ENCODE measurements at regions of chr10 and their contacts with region 1.

Region 1: GRCh38 chr10:9188147-9188949 is 1133.9 kb downstream of the GATA3 start:
- DNase-seq: no peak
- H3K4me3 ChIP-seq: no peak overlapping the region
- H3K27ac ChIP-seq: no peak overlapping the region
- H3K4me1 ChIP-seq: no peaks in the 10 kb centered on the region
- H3K27me3 ChIP-seq: no peaks in the 10 kb centered on the region
- CTCF ChIP-seq: no peak
- POLR2A ChIP-seq: no peak

Region 2: DNA sequence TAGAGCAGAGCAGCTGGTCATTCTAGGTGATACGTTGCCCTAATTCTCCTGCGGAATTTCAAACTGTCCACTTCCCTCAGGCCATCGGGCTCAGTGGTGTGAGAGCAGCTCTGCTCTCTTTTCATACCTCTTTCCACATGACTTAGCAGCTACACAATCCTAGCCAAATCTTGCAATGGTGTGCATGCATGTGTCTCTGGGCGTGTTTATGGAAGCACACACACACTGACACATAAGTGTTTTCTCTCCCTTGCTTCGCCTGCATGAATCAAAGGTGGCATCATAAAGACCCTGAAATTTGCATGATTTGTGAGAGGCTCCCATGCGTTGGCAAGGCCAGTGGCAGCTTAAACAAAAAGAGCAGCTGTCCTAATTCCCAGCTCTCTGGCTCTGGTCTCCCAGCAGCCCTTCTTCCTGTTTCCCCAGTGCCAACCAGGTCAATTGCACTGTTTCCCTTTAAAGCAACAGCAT is 55.6 kb after region 1 on chr10:
- intact Hi-C with region 1: loop called (anchors 2 kb)
- DNase-seq: no peak
- H3K4me3 ChIP-seq: no peak overlapping the region
- H3K27ac ChIP-seq: no peak overlapping the region
- H3K4me1 ChIP-seq: no peaks in the 10 kb centered on the region
- H3K27me3 ChIP-seq: no peaks in the 10 kb centered on the region
- CTCF ChIP-seq: no peak
- POLR2A ChIP-seq: no peak